Psoas muscle (tissue), 8 donors: ENCODE measurements at regions of chr18 and their contacts with region 1.

Region 1: GRCh38 chr18:50902797-50903196 is 23.9 kb downstream of the ME2 start:
- DNase-seq: no peak
- ATAC-seq: no peak
- H3K4me3 ChIP-seq: no peak overlapping the region
- H3K27ac ChIP-seq: no peak overlapping the region
- H3K4me1 ChIP-seq: no peaks in the 10 kb centered on the region
- H3K27me3 ChIP-seq: no peaks in the 10 kb centered on the region
- CTCF ChIP-seq: no peak

Region 2: GRCh38 chr18:50928551-50928950 is 25.8 kb after region 1 on chr18:
- intact Hi-C with region 1: loop called in 1 of 2 experiments (anchors 2 kb)
- DNase-seq: no peak
- ATAC-seq: no peak
- H3K4me3 ChIP-seq: no peak overlapping the region
- H3K27ac ChIP-seq: no peak overlapping the region
- H3K4me1 ChIP-seq: no peaks in the 10 kb centered on the region
- H3K27me3 ChIP-seq: no peaks in the 10 kb centered on the region
- CTCF ChIP-seq: no peak